Activated naive CD4-positive, alpha-beta T cell treated with anti-CD3 and anti-CD28 coated beads for 36 hours (primary cell): ENCODE measurements at regions of chr10 and their contacts with region 1.

Region 1: GRCh38 chr10:27223964-27224363 is 16.6 kb downstream of the ACBD5 start:
- DNase-seq: peak; percentile 57
- H3K4me3 Mint-ChIP-seq: no peak overlapping the region
- H3K27ac Mint-ChIP-seq: no peak overlapping the region
- H3K4me1 Mint-ChIP-seq: peaks cover 7% of the 10 kb centered on the region
- H3K27me3 Mint-ChIP-seq: no peaks in the 10 kb centered on the region

Region 2: GRCh38 chr10:27072436-27073114 is 151.4 kb before region 1 on chr10:
- CTCF ChIA-PET with region 1: no interaction called
- intact Hi-C with region 1: no loop called
- DNase-seq: no peak
- H3K4me3 Mint-ChIP-seq: no peak overlapping the region
- H3K27ac Mint-ChIP-seq: no peak overlapping the region
- H3K4me1 Mint-ChIP-seq: peaks cover 16% of the 10 kb centered on the region
- H3K27me3 Mint-ChIP-seq: no peaks in the 10 kb centered on the region

Region 3: GRCh38 chr10:27207350-27207749 is 16.6 kb before region 1 on chr10:
- CTCF ChIA-PET with region 1: interaction called, 14 read pairs
- intact Hi-C with region 1: no loop called
- DNase-seq: no peak
- H3K4me3 Mint-ChIP-seq: no peak overlapping the region
- H3K27ac Mint-ChIP-seq: no peak overlapping the region
- H3K4me1 Mint-ChIP-seq: no peaks in the 10 kb centered on the region
- H3K27me3 Mint-ChIP-seq: no peaks in the 10 kb centered on the region

Region 4: DNA sequence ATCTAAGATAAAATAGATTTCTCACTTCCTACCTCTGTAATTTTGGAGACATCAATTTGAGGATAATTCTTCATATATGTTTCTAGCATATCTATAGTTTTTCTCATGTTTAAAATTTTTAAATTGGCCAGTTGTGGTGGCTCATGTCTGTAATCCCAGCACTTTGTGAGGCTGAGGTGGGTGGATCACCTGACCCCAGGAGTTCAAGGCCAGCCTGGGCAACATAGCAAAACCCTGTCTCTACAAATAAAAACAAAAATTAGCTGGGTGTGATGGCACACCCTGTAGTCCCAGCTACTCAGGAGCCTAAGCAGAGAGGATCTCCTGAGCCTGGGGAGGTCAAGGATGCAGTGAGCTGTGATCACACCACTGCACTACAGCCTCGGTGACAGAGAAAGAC is 11.7 kb after region 1 on chr10:
- CTCF ChIA-PET with region 1: interaction called, 29 read pairs
- intact Hi-C with region 1: no loop called
- DNase-seq: no peak
- H3K4me3 Mint-ChIP-seq: no peak overlapping the region
- H3K27ac Mint-ChIP-seq: no peak overlapping the region
- H3K4me1 Mint-ChIP-seq: peaks cover 9% of the 10 kb centered on the region
- H3K27me3 Mint-ChIP-seq: no peaks in the 10 kb centered on the region

Region 5: DNA sequence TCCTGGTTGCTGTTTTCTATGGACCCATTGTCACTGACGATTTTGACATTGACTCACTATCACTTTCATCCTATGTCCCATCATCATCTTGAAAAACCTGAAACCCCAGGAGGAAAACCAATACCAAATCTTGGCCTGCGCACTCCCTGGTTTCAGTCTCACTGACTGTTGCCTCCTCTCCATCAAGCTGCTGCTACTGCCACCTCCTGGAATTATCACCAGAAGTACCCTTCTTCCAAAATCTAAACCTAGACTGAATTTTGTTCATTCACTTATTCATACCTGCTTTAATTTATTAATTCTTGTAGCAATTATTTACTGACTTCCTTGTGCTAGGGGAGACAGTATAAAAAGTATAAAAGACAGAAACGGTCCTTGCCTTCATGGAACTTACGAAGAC is 61.1 kb after region 1 on chr10:
- CTCF ChIA-PET with region 1: interaction called, 7 read pairs
- intact Hi-C with region 1: loop called (anchors 1 kb)
- DNase-seq: peak; percentile 71
- H3K4me3 Mint-ChIP-seq: no peak overlapping the region
- H3K27ac Mint-ChIP-seq: peak overlapping the region; percentile 77
- H3K4me1 Mint-ChIP-seq: peaks cover 5% of the 10 kb centered on the region
- H3K27me3 Mint-ChIP-seq: no peaks in the 10 kb centered on the region

Region 6: DNA sequence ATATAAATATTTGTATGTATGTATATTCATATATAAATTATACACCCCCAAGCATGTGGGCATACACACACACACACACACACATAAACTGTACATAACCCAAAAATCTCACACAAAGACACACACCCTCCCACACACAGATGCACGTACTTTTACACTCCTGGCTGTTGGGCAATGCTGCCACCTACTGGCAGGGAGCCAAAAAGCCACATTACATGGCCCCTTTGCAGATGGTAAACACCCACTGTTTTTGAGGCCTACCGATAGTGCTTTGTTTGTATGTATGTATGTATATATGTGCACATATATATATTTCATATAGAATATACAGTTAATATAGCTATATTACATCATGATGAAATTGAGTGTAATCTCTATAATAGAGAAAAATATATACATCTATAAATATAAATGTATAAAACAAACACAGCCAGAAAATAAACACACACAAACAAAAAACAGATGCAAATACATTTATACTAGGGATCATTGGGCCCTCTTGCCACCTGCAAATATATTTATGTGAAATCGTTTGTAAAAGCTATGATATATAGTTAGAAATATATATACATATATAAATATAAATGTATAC is 136.7 kb after region 1 on chr10:
- CTCF ChIA-PET with region 1: interaction called, 17 read pairs
- intact Hi-C with region 1: loop called (anchors 1 kb)
- DNase-seq: peak; percentile 89
- H3K4me3 Mint-ChIP-seq: no peak overlapping the region
- H3K27ac Mint-ChIP-seq: no peak overlapping the region
- H3K4me1 Mint-ChIP-seq: peaks cover 3% of the 10 kb centered on the region
- H3K27me3 Mint-ChIP-seq: no peaks in the 10 kb centered on the region